Right ventricle myocardium superior (tissue), 1 donor: ENCODE measurements at regions of chr3 and their contacts with region 1.

Region 1: GRCh38 chr3:191051037-191051436 is 148.0 kb upstream of the OSTN start:
- DNase-seq: no peak
- ATAC-seq: peak; percentile 43

Region 2: GRCh38 chr3:190696777-190697501 is 354.1 kb before region 1 on chr3:
- intact Hi-C with region 1: loop called (anchors 5 kb)
- DNase-seq: no peak
- ATAC-seq: peak; percentile 28

Region 3: GRCh38 chr3:190811775-190812480 is 239.1 kb before region 1 on chr3:
- intact Hi-C with region 1: loop called (anchors 5 kb)
- DNase-seq: no peak
- ATAC-seq: peak; percentile 32

Region 4: GRCh38 chr3:190883973-190884832 is 166.8 kb before region 1 on chr3:
- intact Hi-C with region 1: loop called (anchors 5 kb)
- DNase-seq: no peak
- ATAC-seq: no peak